ENCODE measurements at regions of chr3 and their contacts with region 1.

Region 1: GRCh38 chr3:120348981-120349818 is at the start of gene LRRC58:
- DNase-seq: peak; percentile 93
- ATAC-seq: peak; percentile 88
- H3K4me3 Mint-ChIP-seq: peak within 1 kb of the TSS; percentile 91
- H3K27ac Mint-ChIP-seq: peak within 1 kb of the TSS; percentile 94
- H3K4me1 Mint-ChIP-seq: peaks cover 43% of the 10 kb centered on the region
- H3K27me3 Mint-ChIP-seq: peaks cover 2% of the 10 kb centered on the region
- total RNA-seq, gene LRRC58: 20.7 to 22.2 TPM

Region 2: GRCh38 chr3:119463171-119464169 is 885.7 kb before region 1 on chr3 and contains the start of gene TMEM39A:
- CTCF ChIA-PET with region 1: no interaction called
- POLR2A ChIA-PET with region 1: no interaction called
- intact Hi-C with region 1: loop called in 1 of 2 experiments (anchors 2 kb)
- DNase-seq: peak; percentile 99
- ATAC-seq: peak; percentile 89
- H3K4me3 Mint-ChIP-seq: peak within 1 kb of the TSS; percentile 99
- H3K27ac Mint-ChIP-seq: peak within 1 kb of the TSS; percentile 91
- H3K4me1 Mint-ChIP-seq: peaks cover 41% of the 10 kb centered on the region
- H3K27me3 Mint-ChIP-seq: no peaks in the 10 kb centered on the region
- total RNA-seq, gene TMEM39A: 24.5 to 30.5 TPM

Region 3: DNA sequence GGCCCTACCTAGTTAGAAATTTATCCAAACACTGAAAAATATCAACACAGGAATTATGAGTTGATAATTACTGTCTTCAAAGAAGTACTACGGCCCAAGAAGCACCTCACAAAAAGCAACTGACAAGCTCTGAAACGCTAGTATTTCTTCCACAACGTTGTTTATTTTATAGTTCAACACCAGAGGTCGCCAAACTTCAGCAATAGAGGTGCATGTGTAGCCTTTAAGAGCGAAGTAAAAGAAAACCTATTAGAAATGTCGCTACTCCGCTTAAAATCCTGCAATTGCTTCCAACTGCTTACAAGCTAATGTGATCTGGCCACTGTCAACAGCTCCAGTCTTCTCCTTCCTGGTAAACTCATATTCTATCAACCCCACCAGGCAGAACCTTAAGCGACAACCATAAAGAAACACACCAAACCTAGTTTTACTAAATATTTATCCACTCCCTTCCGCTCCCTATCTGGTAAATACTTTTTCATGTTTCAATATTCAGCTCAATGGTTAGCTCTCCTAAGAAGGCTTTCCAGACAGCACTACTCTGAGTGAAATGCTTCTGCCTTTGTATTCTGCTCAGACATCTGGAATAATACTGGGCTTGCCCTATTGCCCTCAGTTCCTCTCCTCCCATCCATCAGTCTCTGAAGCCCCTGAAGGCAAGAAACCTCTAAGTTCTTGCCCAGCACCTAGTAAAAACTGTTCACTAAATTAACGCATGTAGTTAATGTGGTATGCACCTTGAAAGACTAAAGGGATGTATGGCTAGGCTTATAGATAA is 457.1 kb before region 1 on chr3:
- CTCF ChIA-PET with region 1: interaction called, 4 read pairs
- POLR2A ChIA-PET with region 1: no interaction called
- intact Hi-C with region 1: loop called in 1 of 2 experiments (anchors 5 kb)
- DNase-seq: peak; percentile 52
- ATAC-seq: peak; percentile 80
- H3K4me3 Mint-ChIP-seq: no peak overlapping the region
- H3K27ac Mint-ChIP-seq: no peak overlapping the region
- H3K4me1 Mint-ChIP-seq: peaks cover 19% of the 10 kb centered on the region
- H3K27me3 Mint-ChIP-seq: no peaks in the 10 kb centered on the region

Region 4: DNA sequence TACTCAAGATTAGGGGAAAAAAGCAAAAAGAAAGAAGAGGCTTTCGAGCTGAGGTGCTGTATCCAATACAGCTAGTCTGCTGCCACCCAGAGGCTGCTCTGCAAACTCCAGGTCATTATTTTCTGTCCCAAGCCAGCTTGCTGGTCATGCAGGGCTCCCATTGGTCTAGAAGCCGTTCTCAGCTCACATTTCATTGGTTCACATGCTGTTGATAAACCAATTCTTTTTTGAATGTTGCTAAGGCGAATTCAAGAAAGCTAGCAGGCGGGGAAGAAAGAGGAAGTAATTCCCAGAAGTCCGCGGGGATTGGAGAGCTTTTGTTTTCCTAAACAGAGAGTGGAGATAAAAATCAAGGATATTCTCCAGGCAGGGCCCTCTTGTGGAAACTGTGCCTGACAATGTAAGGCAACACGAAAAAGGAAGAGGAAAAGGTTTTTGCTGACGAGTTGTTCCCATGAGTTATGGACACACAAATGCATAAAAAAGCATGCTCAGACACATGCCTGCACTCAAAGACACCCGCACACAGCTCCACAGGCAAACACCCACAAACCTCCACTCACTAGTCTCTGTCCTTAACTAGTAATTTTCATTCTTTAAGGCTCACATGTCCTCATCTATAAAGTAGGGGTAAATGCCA is 68.2 kb after region 1 on chr3:
- CTCF ChIA-PET with region 1: interaction called, 17 read pairs
- POLR2A ChIA-PET with region 1: no interaction called
- intact Hi-C with region 1: loop called (anchors 1 to 2 kb)
- DNase-seq: peak; percentile 93
- ATAC-seq: peak; percentile 99
- H3K4me3 Mint-ChIP-seq: peak overlapping the region; percentile 73
- H3K27ac Mint-ChIP-seq: peak overlapping the region; percentile 52
- H3K4me1 Mint-ChIP-seq: peaks cover 11% of the 10 kb centered on the region
- H3K27me3 Mint-ChIP-seq: peaks cover 4% of the 10 kb centered on the region

Region 5: DNA sequence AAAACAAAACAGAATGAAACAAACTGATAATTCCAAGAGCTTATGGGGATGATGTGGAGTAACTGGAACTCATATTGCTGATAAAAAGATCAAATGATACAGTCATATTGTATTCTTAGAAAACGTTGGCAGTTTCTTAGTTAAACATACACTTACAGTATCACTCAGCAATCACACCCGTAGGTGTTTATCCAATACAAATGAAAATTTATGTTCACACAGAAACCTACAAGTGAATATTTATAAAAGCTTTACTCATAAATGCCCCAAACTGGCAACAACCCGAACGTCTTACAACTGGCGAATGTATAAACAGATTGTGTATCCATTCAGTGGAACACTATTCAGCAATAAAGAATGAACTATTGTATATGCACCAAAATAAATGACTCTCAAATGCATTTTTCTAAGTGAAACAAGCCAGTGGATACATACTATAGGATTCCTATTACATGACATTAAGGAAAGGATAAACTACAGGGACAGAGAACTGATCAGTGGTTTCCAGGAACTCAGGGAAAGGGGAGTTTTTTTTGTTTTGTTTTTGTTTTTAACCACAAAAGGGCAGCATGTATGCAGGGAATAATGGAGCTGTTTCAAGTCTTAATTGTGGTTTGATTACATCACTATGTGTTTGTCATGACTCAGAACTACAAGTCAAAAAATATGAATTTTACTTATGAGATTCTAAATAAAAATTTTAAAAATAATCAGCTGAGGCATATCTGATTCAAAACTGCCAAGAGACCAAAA is 175.1 kb after region 1 on chr3:
- CTCF ChIA-PET with region 1: no interaction called
- POLR2A ChIA-PET with region 1: no interaction called
- intact Hi-C with region 1: no loop called
- DNase-seq: no peak
- ATAC-seq: peak; percentile 44
- H3K4me3 Mint-ChIP-seq: no peak overlapping the region
- H3K27ac Mint-ChIP-seq: no peak overlapping the region
- H3K4me1 Mint-ChIP-seq: peaks cover 5% of the 10 kb centered on the region
- H3K27me3 Mint-ChIP-seq: peaks cover 6% of the 10 kb centered on the region

Region 6: GRCh38 chr3:120699333-120699732 is 350.1 kb after region 1 on chr3:
- CTCF ChIA-PET with region 1: no interaction called
- POLR2A ChIA-PET with region 1: no interaction called
- intact Hi-C with region 1: no loop called
- DNase-seq: no peak
- ATAC-seq: no peak
- H3K4me3 Mint-ChIP-seq: no peak overlapping the region
- H3K27ac Mint-ChIP-seq: no peak overlapping the region
- H3K4me1 Mint-ChIP-seq: no peaks in the 10 kb centered on the region
- H3K27me3 Mint-ChIP-seq: no peaks in the 10 kb centered on the region

Region 7: DNA sequence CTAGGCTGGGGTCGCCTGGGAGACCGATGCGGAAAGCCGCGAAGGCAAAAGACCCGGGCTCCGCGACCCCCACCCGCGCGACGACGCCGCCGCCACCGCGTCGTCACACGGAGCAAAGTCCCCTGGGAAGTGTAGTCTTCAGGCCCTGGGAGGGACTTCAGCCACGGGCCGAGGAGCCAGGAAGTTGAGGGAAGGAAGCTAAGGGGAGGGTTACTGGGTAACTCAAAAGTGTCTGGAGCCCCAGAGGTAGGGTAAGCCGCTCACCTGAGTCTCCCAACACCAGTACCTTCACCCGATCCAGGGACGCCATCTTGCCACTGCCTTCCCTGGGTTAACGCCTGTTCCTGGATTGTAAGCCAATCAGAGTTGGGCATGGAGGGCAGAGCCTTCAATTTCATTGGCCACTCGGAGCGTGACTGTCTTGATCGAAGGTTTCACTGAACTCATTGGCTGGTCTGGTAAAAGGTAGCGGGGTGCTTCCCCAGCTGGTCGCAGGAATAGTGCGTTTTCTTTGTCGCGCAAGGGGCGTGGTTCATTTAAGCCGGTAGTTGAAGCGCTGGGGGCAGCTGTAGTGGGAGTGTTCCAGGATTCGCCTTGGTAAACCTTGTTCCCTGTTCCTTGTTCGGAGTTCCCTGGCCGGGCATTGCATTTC is 393.1 kb after region 1 on chr3 and contains the starts of genes GTF2E1 and RABL3:
- CTCF ChIA-PET with region 1: no interaction called
- POLR2A ChIA-PET with region 1: no interaction called
- intact Hi-C with region 1: loop called in 1 of 2 experiments (anchors 1 kb)
- DNase-seq: peak; percentile 96
- ATAC-seq: peak; percentile 99
- H3K4me3 Mint-ChIP-seq: peak within 1 kb of the TSS; percentile 98
- H3K27ac Mint-ChIP-seq: peak within 1 kb of the TSS; percentile 95
- H3K4me1 Mint-ChIP-seq: peaks cover 28% of the 10 kb centered on the region
- H3K27me3 Mint-ChIP-seq: no peaks in the 10 kb centered on the region
- total RNA-seq, gene GTF2E1: 26.1 to 27.0 TPM
- total RNA-seq, gene RABL3: 35.5 to 37.8 TPM

Measured in activated CD4-positive, alpha-beta T cell treated with anti-CD3 and anti-CD28 coated beads for 36 hours (primary cell).